MCF 10A (cell line): ENCODE measurements at regions of chr12 and their contacts with region 1.

Region 1: GRCh38 chr12:110124184-110124995 is at the start of gene IFT81:
- DNase-seq: peak; percentile 92
- H3K4me3 Mint-ChIP-seq: peak within 1 kb of the TSS; percentile 82
- H3K27ac Mint-ChIP-seq: peak within 1 kb of the TSS; percentile 92
- H3K4me1 Mint-ChIP-seq: peaks cover 13% of the 10 kb centered on the region
- H3K27me3 Mint-ChIP-seq: no peaks in the 10 kb centered on the region
- CTCF ChIP-seq: no peak
- total RNA-seq, gene IFT81: 8.5 and 8.7 TPM in 2 replicates

Region 2: DNA sequence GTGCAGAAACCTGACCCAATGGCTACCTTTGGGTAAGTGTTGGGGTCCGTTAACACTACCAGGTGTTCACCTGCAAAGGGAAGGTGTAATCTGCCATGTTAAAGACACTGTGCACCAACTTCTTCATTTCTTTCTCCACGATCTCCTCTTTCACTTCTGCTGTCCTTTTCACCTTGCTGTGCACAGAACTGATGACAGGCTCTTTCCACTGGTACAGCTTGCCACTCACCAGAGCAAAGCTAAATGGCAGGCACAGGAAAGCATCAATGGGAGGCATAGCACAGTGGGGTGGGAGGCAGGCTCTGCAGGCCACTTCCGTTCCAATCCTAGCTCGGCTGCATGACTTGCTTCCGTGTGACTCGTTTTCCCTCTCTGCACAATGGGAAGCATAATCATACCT is 73.5 kb before region 1 on chr12:
- CTCF ChIA-PET with region 1: no interaction called
- POLR2A ChIA-PET with region 1: no interaction called
- intact Hi-C with region 1: no loop called
- DNase-seq: no peak
- H3K4me3 Mint-ChIP-seq: no peak overlapping the region
- H3K27ac Mint-ChIP-seq: no peak overlapping the region
- H3K4me1 Mint-ChIP-seq: peaks cover 32% of the 10 kb centered on the region
- H3K27me3 Mint-ChIP-seq: no peaks in the 10 kb centered on the region
- CTCF ChIP-seq: no peak

Region 3: GRCh38 chr12:110134691-110135411 is 10.5 kb after region 1 on chr12:
- CTCF ChIA-PET with region 1: interaction called, 7 read pairs
- POLR2A ChIA-PET with region 1: interaction called, 11 read pairs
- intact Hi-C with region 1: no loop called
- DNase-seq: no peak
- H3K4me3 Mint-ChIP-seq: no peak overlapping the region
- H3K27ac Mint-ChIP-seq: no peak overlapping the region
- H3K4me1 Mint-ChIP-seq: no peaks in the 10 kb centered on the region
- H3K27me3 Mint-ChIP-seq: no peaks in the 10 kb centered on the region
- CTCF ChIP-seq: no peak

Region 4: GRCh38 chr12:110289044-110289710 is 164.8 kb after region 1 on chr12:
- CTCF ChIA-PET with region 1: no interaction called
- POLR2A ChIA-PET with region 1: interaction called, 10 read pairs
- intact Hi-C with region 1: loop called (anchors 5 kb)
- DNase-seq: no peak
- H3K4me3 Mint-ChIP-seq: no peak overlapping the region
- H3K27ac Mint-ChIP-seq: peak overlapping the region; percentile 62
- H3K4me1 Mint-ChIP-seq: peaks cover 24% of the 10 kb centered on the region
- H3K27me3 Mint-ChIP-seq: no peaks in the 10 kb centered on the region
- CTCF ChIP-seq: no peak